Activated CD4-positive, alpha-beta T cell treated with anti-CD3 and anti-CD28 coated beads, Interleukin-2, amount 10 ng/mL, durations not matched to agents 24 days and 14 days (primary cell): ENCODE measurements at regions of chr5 and their contacts with region 1.

Region 1: DNA sequence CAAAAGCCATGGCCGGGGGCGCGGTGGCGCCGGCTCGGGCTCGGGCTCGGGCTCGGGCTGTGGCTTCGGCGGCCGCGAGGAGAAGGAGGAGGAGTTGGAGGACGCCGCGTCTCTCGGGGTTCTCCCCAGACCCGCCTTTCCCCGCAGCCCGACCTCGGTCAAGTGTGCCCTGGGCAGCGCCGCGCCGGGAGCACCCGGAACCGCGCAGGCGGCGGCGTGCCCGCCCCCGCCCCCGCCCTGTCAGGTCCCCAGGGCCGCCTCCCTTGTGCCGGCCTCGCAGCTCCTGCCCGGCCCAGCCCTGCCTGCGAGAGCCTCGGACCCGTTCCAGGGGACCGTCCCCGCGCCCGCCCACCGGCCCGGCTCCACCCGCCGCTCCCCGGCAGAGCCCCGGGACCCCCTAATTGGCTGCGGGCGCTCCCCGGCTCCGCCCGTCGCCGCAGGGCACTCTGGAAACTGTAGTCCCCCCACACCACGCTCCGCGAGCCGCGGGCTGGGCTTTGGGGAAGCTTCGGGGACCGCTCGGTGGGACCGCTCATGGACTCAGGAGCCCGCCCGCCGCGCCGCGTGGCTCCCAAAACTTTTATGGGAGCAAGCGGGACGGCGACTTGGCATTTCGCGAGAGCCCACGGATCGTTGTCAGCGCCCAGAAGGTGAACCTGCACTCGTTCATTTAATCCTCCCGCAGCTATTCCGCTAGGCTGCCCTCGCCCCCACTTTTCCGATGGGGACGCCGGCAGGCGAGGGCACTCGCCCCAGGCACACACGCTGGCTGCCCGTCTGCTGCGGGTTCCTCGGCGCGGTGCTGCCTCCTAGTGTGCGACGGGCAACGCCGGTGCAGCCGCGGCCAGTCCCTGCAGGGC is at the start of gene STK10:
- DNase-seq: peak; percentile 97
- H3K4me3 Mint-ChIP-seq: peak within 1 kb of the TSS; percentile 99
- H3K27ac Mint-ChIP-seq: peak within 1 kb of the TSS; percentile 99
- H3K4me1 Mint-ChIP-seq: peaks cover 38% of the 10 kb centered on the region
- H3K27me3 Mint-ChIP-seq: peaks cover 7% of the 10 kb centered on the region
- total RNA-seq, gene STK10: 87.9 and 91.1 TPM in 2 replicates

Region 2: GRCh38 chr5:171961117-171961516 is 227.1 kb before region 1 on chr5:
- intact Hi-C with region 1: loop called (anchors 5 kb)
- DNase-seq: peak; percentile 67
- H3K4me3 Mint-ChIP-seq: peak overlapping the region; percentile 21
- H3K27ac Mint-ChIP-seq: peak overlapping the region; percentile 70
- H3K4me1 Mint-ChIP-seq: peaks cover 57% of the 10 kb centered on the region
- H3K27me3 Mint-ChIP-seq: no peaks in the 10 kb centered on the region

Region 3: DNA sequence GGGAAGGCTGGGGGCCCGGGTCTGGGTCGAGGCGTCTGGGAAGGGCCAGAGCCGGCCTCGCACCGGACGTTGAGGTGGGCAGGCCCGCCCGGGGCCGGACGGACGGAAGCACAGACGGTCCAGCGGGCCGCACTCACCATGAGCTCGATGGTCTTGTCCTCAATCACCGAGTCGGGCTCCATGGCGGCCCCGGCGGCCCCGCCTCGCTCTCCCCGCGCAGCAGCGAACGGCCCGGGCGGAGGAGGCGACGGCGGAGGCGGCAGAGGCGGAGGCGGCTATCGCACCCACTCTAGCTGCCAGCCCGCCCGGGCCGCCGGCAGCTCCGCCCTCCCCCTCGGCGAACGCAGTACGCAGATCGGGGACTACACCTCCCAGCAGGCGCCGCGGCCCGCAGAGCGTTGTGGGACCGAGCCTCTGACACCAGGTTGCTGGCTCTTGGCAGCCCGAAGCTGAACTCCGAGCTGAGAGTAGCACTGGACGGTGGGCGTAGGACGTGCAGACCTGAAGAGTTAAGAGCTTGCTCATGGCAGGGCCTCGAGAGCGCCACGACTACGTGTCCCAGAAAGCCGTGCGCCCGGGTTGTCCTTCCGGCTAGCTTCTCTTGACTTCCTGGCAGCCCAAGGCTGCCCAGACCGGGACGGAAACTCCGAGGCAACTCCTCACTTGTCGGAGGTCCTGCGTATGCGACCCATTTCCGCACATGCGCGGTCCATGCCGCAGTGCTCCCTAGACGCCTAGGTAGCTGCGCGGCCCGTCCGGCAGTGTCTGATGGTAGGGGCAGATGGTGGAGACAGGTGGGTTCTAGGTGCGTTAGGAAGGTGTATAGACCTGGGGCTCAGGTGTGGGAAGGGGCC is 181.7 kb before region 1 on chr5 and contains the start of gene FBXW11:
- intact Hi-C with region 1: loop called (anchors 1 kb)
- DNase-seq: peak; percentile 98
- H3K4me3 Mint-ChIP-seq: peak within 1 kb of the TSS; percentile 99
- H3K27ac Mint-ChIP-seq: peak within 1 kb of the TSS; percentile 99
- H3K4me1 Mint-ChIP-seq: peaks cover 46% of the 10 kb centered on the region
- H3K27me3 Mint-ChIP-seq: no peaks in the 10 kb centered on the region
- total RNA-seq, gene FBXW11: 53.3 and 54.4 TPM in 2 replicates

Region 4: DNA sequence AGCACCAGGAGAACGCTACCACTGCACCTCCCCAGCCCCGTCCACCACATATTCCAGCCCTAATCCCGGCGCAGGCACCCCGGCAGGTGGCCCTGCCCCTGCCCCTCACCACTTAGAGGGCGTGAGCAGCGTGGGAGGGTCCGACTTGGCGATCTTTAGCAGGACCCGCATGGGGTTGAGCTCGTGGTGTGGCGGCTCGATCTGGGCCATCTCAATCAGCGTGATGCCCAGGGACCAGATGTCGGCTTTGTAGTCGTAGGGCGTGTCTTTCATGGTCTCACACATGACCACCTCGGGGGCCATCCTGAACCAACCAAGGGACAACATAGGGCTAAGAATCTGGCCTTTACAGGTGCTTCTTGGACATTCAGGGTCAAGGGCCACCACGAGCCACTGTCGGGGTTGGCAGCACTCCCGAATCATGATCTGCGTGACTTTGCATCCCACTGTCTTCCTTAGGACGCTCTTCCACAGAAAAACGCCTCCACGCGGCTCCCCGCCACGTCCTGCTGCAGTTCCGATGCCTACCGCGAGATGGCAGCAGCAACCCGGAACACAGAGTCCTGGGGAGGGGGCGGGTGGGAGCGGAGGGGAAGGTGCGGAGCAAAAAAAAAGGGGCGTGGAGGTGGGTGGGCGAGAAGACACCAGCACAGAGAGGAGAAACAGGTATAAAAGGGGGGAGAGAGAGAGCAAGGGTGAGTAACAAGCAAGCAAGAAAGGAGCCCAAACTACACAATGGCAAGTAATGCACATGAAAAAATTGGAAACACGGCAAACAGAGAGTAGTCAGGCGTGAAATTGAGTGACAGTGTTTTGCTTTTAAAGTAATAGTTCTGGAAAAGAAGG is 81.5 kb before region 1 on chr5:
- intact Hi-C with region 1: loop called (anchors 1 kb)
- DNase-seq: peak; percentile 91
- H3K4me3 Mint-ChIP-seq: no peak overlapping the region
- H3K27ac Mint-ChIP-seq: peak overlapping the region; percentile 75
- H3K4me1 Mint-ChIP-seq: peaks cover 51% of the 10 kb centered on the region
- H3K27me3 Mint-ChIP-seq: no peaks in the 10 kb centered on the region

Region 5: GRCh38 chr5:172123269-172123692 is 65.0 kb before region 1 on chr5:
- intact Hi-C with region 1: no loop called
- DNase-seq: no peak
- H3K4me3 Mint-ChIP-seq: no peak overlapping the region
- H3K27ac Mint-ChIP-seq: no peak overlapping the region
- H3K4me1 Mint-ChIP-seq: peaks cover 16% of the 10 kb centered on the region
- H3K27me3 Mint-ChIP-seq: no peaks in the 10 kb centered on the region

Region 6: GRCh38 chr5:172223901-172224873 is 35.9 kb after region 1 on chr5:
- intact Hi-C with region 1: loop called (anchors 1 kb)
- DNase-seq: peak; percentile 69
- H3K4me3 Mint-ChIP-seq: peak overlapping the region; percentile 17
- H3K27ac Mint-ChIP-seq: peak overlapping the region; percentile 73
- H3K4me1 Mint-ChIP-seq: peaks cover 22% of the 10 kb centered on the region
- H3K27me3 Mint-ChIP-seq: peaks cover 7% of the 10 kb centered on the region

Region 7: DNA sequence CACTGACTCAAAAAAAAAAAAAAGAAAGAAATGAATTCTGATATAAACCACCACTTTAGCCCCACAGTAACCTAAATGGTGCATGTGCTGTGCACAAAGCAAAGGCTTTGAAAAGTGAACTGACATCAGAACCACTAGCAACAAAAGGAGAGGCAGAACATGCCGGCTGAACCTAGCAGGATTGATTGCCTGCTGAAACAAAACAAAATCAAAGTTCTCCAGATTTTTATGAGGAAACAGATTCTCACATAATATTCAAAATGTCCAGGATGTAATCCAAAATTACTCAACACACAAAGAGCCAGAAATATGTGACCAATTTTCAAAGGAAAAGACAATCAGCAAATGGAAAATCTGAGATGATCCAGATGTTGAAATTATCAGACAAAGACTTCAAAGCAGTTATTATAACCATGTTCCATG is 57.5 kb after region 1 on chr5:
- intact Hi-C with region 1: no loop called
- DNase-seq: no peak
- H3K4me3 Mint-ChIP-seq: no peak overlapping the region
- H3K27ac Mint-ChIP-seq: no peak overlapping the region
- H3K4me1 Mint-ChIP-seq: peaks cover 2% of the 10 kb centered on the region
- H3K27me3 Mint-ChIP-seq: no peaks in the 10 kb centered on the region

Region 8: DNA sequence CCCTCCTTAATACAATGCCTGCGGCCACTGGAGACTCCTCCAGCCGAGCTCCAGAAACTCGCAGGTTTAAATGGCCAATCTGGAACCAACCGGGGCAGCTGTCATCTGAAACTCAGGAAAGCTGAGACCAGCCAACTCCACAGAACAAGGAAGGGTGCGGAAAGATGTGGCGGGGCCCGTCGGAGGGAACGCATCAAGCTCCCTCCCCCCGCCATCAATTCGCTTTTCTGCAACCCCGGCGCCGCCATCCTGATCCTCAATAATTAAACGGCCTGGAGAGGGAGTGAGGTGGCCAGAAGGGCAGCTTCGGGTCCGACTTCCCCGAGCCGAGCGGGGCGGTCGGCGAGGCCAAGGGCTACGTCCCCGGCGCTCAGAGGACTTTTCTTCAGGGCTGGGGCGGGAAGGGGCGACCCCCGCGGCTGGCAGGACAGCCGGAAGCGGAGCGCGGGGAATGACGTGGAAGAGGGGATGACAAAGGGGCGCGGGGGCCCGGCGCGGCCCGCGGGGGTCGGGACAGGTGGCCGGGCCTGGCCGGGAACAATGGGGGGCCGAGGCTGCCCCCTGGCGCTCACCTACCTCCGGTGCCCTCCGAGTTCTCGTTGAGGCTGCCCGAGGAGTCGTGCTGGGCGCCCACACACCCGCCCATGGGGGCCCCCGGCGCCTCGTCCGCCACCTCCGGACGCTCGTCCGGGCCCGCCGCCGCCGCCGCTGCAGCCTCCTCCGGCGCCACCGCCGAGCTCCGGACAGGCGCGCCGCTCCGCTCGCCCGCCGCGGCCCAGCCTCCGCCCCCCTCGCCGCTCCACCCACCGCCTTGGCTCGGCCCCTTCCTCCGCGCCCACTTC is 95.0 kb after region 1 on chr5 and contains the start of gene UBTD2:
- intact Hi-C with region 1: loop called (anchors 1 kb)
- DNase-seq: peak; percentile 95
- H3K4me3 Mint-ChIP-seq: peak within 1 kb of the TSS; percentile 89
- H3K27ac Mint-ChIP-seq: peak within 1 kb of the TSS; percentile 81
- H3K4me1 Mint-ChIP-seq: peaks cover 23% of the 10 kb centered on the region
- H3K27me3 Mint-ChIP-seq: peaks cover 25% of the 10 kb centered on the region
- total RNA-seq, gene UBTD2: 5.5 and 6.3 TPM in 2 replicates